BJ (cell line): ENCODE measurements at regions of chr7 and their contacts with region 1.

Region 1: DNA sequence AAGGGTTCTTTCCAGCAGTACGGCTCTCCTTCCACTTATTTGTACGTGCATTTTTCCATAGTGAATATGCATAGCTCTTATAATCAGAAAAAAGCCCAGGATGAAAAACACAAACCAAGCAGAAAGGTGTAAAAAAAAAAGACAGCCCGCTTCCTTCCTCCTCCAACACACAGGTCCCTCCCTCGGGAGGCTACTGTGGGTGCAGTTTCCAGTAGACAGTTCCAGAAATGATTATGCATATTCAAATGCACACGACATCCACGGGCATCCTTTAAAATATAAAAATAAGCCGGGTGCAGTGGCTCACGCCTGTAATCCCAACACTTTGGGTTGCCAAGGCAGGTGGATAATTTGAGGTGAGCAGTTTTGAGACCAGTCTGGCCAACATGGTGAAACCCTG is 59.9 kb downstream of the TNRC18 start:
- DNase-seq: no peak
- H3K4me3 ChIP-seq: no peak overlapping the region
- H3K27me3 ChIP-seq: no peaks in the 10 kb centered on the region
- CTCF ChIP-seq: no peak

Region 2: DNA sequence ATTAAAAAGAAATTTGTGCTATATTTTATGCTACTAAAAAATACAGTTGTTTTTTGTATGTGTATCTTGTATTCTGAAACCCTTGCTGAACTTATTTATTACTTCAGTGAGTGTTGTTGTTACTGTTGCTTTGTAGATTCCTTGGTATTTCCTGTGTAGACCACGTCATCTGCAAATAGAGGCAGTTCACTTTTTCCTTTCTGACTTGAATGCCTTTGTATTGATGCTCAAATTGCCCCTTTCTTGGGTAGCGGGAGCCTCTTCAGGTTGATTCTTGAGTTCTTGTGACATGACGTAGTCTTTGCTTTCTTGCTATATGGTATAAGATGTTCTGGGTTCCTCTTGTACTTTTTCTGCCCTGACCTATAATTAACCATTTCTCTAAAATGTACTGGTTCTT is 1558.6 kb before region 1 on chr7:
- CTCF ChIA-PET with region 1: no interaction called
- POLR2A ChIA-PET with region 1: no interaction called
- DNase-seq: no peak
- H3K4me3 ChIP-seq: no peak overlapping the region
- H3K27me3 ChIP-seq: no peaks in the 10 kb centered on the region
- CTCF ChIP-seq: no peak

Region 3: DNA sequence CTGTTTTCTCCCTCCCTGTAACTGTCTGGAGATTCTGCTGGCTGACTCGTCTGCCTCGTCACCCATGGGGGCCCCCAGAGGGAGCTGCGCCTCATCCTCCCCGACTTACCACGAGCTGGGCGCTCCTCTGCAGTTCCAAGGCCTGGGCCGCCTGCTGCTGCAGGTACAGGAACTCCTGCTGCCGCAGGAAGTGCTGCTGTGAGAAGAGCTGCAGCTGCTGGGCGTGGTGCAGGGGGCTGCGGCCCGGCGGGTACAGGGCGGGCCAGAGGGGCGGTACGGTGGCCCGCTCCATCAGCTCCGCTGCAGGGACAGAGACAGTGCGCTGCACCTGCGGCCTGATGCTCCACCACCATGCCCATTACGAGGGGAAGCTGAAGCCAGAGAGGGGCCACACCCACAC is 12.2 kb after region 1 on chr7:
- CTCF ChIA-PET with region 1: interaction called, 14 read pairs
- POLR2A ChIA-PET with region 1: no interaction called
- DNase-seq: no peak
- H3K4me3 ChIP-seq: no peak overlapping the region
- H3K27me3 ChIP-seq: no peaks in the 10 kb centered on the region
- CTCF ChIP-seq: no peak

Region 4: GRCh38 chr7:5382281-5382892 is 18.7 kb after region 1 on chr7:
- CTCF ChIA-PET with region 1: interaction called, 15 read pairs
- POLR2A ChIA-PET with region 1: interaction called, 4 read pairs
- DNase-seq: no peak
- H3K4me3 ChIP-seq: no peak overlapping the region
- H3K27me3 ChIP-seq: no peaks in the 10 kb centered on the region
- CTCF ChIP-seq: no peak

Region 5: DNA sequence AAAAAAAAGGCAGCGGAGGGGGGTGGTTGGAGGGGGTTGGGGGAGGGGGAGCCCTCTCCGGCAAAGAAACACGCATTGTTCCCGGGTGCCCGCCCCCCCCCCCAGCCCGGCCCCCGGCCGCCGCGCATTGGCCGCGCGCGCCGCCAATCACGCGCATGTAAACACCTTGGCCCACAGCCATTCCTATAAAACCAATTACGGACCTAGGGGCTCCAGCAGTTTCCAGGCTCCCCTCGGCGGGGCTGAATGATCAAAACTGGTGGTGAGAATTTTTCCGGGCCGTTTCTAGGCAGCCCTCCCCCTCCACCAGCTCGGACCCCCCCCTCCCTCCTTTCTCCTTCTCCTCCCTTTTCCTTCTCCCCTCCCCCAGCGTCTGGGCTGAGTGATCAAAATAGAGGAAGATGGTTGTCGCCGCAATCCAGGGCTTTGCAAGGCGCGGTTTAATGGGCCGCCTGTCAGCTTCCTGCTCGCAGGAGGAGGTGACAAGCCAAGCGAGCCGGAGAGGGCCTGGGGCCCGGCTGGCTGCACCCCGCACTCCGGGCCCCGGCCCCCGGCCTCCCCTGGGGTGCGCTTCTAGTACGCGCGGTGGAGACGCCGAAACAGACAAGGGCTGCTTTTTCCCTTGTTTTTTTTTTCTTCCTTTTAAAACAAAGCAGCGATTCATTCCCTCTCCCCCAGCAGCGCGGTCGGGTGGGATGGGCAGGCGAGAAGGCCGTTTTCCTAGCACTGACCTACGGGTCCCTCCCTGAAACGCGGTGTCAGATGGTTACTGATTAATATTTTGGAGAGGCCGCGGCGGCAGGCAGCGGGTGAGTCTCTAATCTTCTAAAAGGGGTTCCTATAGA is 60.3 kb after region 1 on chr7:
- CTCF ChIA-PET with region 1: interaction called, 5 read pairs
- POLR2A ChIA-PET with region 1: interaction called, 16 read pairs
- DNase-seq: peak; percentile 89
- H3K4me3 ChIP-seq: peak overlapping the region; percentile 82
- H3K27me3 ChIP-seq: no peaks in the 10 kb centered on the region
- CTCF ChIP-seq: no peak

Region 6: DNA sequence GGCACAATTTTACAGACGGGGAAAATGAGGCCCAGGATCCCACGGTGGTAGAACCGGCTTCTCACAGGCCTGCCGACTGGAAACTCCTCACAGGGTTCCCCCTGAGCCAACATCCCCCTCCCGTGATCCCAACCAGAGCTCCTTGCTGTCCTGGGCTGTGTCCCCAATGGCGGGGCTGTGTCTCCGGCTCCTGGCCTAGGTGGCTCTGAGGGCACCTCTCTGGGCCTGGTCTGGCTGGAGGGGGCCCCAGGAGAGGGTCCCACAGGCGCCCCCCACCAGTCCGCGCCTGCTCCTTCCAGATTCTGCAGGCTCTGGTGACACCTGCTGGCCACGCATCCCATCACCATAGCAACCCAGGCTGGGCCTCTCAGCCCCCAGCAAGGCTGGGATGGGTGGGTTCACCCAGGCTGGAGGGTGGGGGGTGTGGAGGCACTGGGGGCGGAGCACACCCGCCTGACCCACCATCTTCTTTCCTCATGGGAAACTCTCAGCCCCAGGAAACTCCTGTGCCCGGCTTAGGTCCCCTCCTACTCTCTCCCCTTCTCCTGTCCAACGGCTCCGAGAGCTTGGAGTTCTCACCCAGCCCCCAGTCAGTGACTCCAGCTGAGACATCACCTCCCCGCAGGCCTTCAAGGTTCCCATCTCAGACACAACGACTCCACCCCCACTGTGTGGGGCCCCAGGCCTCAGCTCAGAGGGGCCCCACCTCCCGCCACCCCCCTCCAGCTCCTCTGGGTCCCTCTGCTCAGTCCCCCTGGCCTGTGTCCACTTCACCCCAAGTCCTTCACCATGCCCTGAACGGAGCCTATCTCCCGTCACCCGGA is 87.0 kb after region 1 on chr7:
- CTCF ChIA-PET with region 1: interaction called, 19 read pairs
- POLR2A ChIA-PET with region 1: no interaction called
- DNase-seq: no peak
- H3K4me3 ChIP-seq: no peak overlapping the region
- H3K27me3 ChIP-seq: no peaks in the 10 kb centered on the region
- CTCF ChIP-seq: peak; percentile 59